ENCODE measurements at regions of chr15 and their contacts with region 1.

Region 1: GRCh38 chr15:85453038-85453872 is 72.9 kb downstream of the AKAP13 start:
- DNase-seq: no peak
- ATAC-seq: no peak
- H3K4me3 ChIP-seq: no peak overlapping the region
- H3K4me3 Mint-ChIP-seq: no peak overlapping the region
- H3K27ac ChIP-seq: no peak overlapping the region
- H3K27ac Mint-ChIP-seq: peak overlapping the region; percentile 19
- H3K4me1 ChIP-seq: peaks cover 13% of the 10 kb centered on the region
- H3K4me1 Mint-ChIP-seq: peaks cover 62% of the 10 kb centered on the region
- H3K27me3 ChIP-seq: no peaks in the 10 kb centered on the region
- H3K27me3 Mint-ChIP-seq: no peaks in the 10 kb centered on the region
- CTCF ChIP-seq: no peak

Region 2: GRCh38 chr15:85427286-85428028 is 25.8 kb before region 1 on chr15:
- CTCF ChIA-PET with region 1: no interaction called
- POLR2A ChIA-PET with region 1: no interaction called
- intact Hi-C with region 1: loop called in 1 of 2 experiments (anchors 2 kb)
- DNase-seq: no peak
- ATAC-seq: no peak
- H3K4me3 ChIP-seq: no peak overlapping the region
- H3K4me3 Mint-ChIP-seq: no peak overlapping the region
- H3K27ac ChIP-seq: no peak overlapping the region
- H3K27ac Mint-ChIP-seq: no peak overlapping the region
- H3K4me1 ChIP-seq: peaks cover 41% of the 10 kb centered on the region
- H3K4me1 Mint-ChIP-seq: peaks cover 82% of the 10 kb centered on the region
- H3K27me3 ChIP-seq: no peaks in the 10 kb centered on the region
- H3K27me3 Mint-ChIP-seq: no peaks in the 10 kb centered on the region
- CTCF ChIP-seq: no peak